MCF 10A (cell line): ENCODE measurements at regions of chr7 and their contacts with region 1.

Region 1: GRCh38 chr7:102279537-102280400 is 6.9 kb upstream of the SH2B2 start:
- DNase-seq: peak; percentile 67
- H3K4me3 Mint-ChIP-seq: no peak overlapping the region
- H3K27ac Mint-ChIP-seq: no peak overlapping the region
- H3K4me1 Mint-ChIP-seq: peaks cover 1% of the 10 kb centered on the region
- H3K27me3 Mint-ChIP-seq: no peaks in the 10 kb centered on the region
- CTCF ChIP-seq: peak; percentile 92

Region 2: DNA sequence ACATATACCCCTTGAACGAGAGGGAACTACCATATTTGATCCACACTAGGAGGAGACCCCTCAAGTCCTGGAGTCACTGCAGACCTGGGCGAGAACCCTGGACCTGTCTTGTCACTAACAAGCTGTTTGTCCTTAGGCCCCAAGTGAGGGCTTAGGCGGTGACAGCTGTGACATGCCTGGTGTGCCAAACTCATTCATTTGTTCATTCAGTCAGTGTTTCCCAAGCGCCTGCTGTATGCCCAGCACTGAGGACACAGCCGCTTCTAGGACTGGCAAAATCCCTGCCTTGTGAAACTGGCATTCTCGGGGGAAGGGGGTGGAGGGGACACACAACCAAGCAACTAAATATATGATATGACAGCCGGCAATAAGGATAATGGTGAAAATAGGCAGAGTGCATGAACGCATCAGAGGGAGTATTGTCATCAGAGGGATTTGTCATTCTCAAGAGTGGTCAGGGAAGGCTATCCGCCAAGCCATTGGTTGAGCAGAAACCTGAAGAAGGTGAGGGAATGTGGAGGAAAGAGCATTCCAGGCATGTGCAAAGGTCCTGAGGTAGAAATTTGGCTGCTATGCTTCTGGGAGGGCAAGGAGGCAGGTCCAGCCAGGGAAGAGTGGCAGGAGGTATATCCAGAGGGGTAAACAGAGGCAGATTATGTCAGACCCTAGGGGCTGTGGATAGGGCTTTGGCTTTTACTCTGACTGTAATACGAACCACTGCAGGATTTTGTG is 17.9 kb after region 1 on chr7:
- CTCF ChIA-PET with region 1: no interaction called
- POLR2A ChIA-PET with region 1: no interaction called
- intact Hi-C with region 1: no loop called
- DNase-seq: no peak
- H3K4me3 Mint-ChIP-seq: no peak overlapping the region
- H3K27ac Mint-ChIP-seq: no peak overlapping the region
- H3K4me1 Mint-ChIP-seq: no peaks in the 10 kb centered on the region
- H3K27me3 Mint-ChIP-seq: no peaks in the 10 kb centered on the region
- CTCF ChIP-seq: no peak

Region 3: GRCh38 chr7:102390697-102391484 is 111.1 kb after region 1 on chr7:
- CTCF ChIA-PET with region 1: interaction called, 38 read pairs
- POLR2A ChIA-PET with region 1: interaction called, 5 read pairs
- intact Hi-C with region 1: loop called (anchors 1 kb)
- DNase-seq: peak; percentile 87
- H3K4me3 Mint-ChIP-seq: no peak overlapping the region
- H3K27ac Mint-ChIP-seq: no peak overlapping the region
- H3K4me1 Mint-ChIP-seq: no peaks in the 10 kb centered on the region
- H3K27me3 Mint-ChIP-seq: no peaks in the 10 kb centered on the region
- CTCF ChIP-seq: peak; percentile 91

Region 4: GRCh38 chr7:102396027-102397019 is 116.6 kb after region 1 on chr7 and contains the start of gene PRKRIP1:
- CTCF ChIA-PET with region 1: interaction called, 38 read pairs
- POLR2A ChIA-PET with region 1: interaction called, 5 read pairs
- intact Hi-C with region 1: no loop called
- DNase-seq: peak; percentile 90
- H3K4me3 Mint-ChIP-seq: peak within 1 kb of the TSS; percentile 98
- H3K27ac Mint-ChIP-seq: peak within 1 kb of the TSS; percentile 98
- H3K4me1 Mint-ChIP-seq: peaks cover 9% of the 10 kb centered on the region
- H3K27me3 Mint-ChIP-seq: no peaks in the 10 kb centered on the region
- CTCF ChIP-seq: no peak
- total RNA-seq, gene PRKRIP1: 32.7 and 36.8 TPM in 2 replicates